Spleen (tissue), 13 donors: ENCODE measurements at regions of chr7 and their contacts with region 1.

Region 1: GRCh38 chr7:83301416-83301815 is 138.7 kb upstream of the PCLO start:
- DNase-seq: no peak
- H3K4me3 ChIP-seq: no peak overlapping the region
- H3K27ac ChIP-seq: no peak overlapping the region
- H3K4me1 ChIP-seq: no peaks in the 10 kb centered on the region
- H3K27me3 ChIP-seq: no peaks in the 10 kb centered on the region
- CTCF ChIP-seq: no peak
- POLR2A ChIP-seq: no peak

Region 2: DNA sequence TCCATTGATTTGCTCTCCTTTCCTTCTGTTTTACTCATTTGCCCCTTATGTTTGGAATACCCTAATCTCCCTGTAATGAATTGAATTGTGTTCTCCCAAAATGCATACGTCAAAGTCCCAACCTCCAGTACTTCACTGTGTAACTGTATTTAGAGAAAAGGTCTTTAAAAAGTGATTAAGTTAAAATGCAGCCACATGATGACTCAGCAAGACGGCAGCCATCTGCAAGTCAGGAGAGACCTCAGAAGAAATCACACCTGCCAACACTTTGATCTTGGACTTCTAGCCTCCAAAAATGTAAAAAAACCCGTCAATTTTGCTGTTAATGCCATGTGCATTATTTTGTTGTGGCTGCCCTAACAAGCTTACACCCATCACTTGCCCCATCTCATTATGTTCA is 53.4 kb before region 1 on chr7:
- intact Hi-C with region 1: loop called (anchors 10 kb)
- DNase-seq: no peak
- H3K4me3 ChIP-seq: no peak overlapping the region
- H3K27ac ChIP-seq: no peak overlapping the region
- H3K4me1 ChIP-seq: no peaks in the 10 kb centered on the region
- H3K27me3 ChIP-seq: no peaks in the 10 kb centered on the region
- CTCF ChIP-seq: no peak
- POLR2A ChIP-seq: no peak